Dendritic cell treated with granulocyte-macrophage colony-stimulating factor and Interleukin-4, amounts not matched to agents 40 ng/mL and 50 ng/mL, for 4 days (primary cell): ENCODE measurements at regions of chr15 and their contacts with region 1.

Region 1: GRCh38 chr15:50669611-50670010 is 17.0 kb downstream of the TRPM7 start:
- H3K4me3 Mint-ChIP-seq: no peak overlapping the region
- H3K27ac Mint-ChIP-seq: no peak overlapping the region
- H3K4me1 Mint-ChIP-seq: no peaks in the 10 kb centered on the region
- H3K27me3 Mint-ChIP-seq: no peaks in the 10 kb centered on the region

Region 2: GRCh38 chr15:50726315-50726714 is 56.7 kb after region 1 on chr15:
- intact Hi-C with region 1: loop called (anchors 10 kb)
- H3K4me3 Mint-ChIP-seq: no peak overlapping the region
- H3K27ac Mint-ChIP-seq: no peak overlapping the region
- H3K4me1 Mint-ChIP-seq: no peaks in the 10 kb centered on the region
- H3K27me3 Mint-ChIP-seq: no peaks in the 10 kb centered on the region